ENCODE measurements at regions of chr12 and their contacts with region 1.

Region 1: DNA sequence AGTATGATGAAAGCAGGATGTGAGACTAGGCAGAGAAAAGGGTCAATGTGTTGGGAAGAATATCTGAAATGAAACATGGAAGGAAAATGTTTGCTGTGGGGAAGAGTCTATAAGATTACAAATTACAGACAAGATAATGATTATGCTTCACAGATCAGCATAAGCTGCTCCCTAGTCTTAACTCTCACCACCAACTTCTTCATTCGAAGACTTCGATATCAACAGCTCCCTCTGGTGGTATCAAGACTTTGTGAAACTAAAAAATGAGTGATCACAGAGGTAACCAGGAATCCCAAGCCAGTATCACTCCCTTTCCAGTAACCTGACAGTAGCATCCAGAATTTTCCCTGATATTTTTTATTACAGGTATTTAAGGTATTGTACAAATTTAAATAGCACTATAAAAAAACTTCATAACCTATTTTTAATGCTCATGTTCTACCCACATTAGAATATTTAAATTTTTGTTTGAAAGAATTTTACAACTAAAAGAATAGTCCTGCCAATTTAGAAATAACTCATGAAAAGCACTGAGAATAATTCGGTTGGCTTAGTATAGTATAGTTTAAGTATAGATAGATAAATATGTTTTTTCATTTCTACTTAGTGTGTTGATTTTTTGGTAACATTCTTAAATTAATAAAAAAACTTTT is 84.4 kb downstream of the C2CD5 start:
- DNase-seq: no peak
- ATAC-seq: peak in 2 of 4 donors; percentile 42 to 77
- H3K4me3 ChIP-seq: no peak overlapping the region
- H3K27ac ChIP-seq: no peak overlapping the region
- H3K4me1 ChIP-seq: peaks cover 0 to 14% (median 0%) of the 10 kb centered on the region in 12 donors
- H3K27me3 ChIP-seq: no peaks in the 10 kb centered on the region
- CTCF ChIP-seq: peak in 11 of 12 donors; percentile 37 to 73 (median 57)
- POLR2A ChIP-seq: no peak

Region 2: GRCh38 chr12:22083167-22083566 is 376.8 kb before region 1 on chr12:
- intact Hi-C with region 1: loop called in 5 of 10 experiments (anchors 5 kb)
- DNase-seq: no peak
- ATAC-seq: no peak
- H3K4me3 ChIP-seq: no peak overlapping the region
- H3K27ac ChIP-seq: no peak overlapping the region
- H3K4me1 ChIP-seq: no peaks in the 10 kb centered on the region
- H3K27me3 ChIP-seq: no peaks in the 10 kb centered on the region
- CTCF ChIP-seq: peak; percentile 27 to 68 (median 55)
- POLR2A ChIP-seq: no peak

Region 3: DNA sequence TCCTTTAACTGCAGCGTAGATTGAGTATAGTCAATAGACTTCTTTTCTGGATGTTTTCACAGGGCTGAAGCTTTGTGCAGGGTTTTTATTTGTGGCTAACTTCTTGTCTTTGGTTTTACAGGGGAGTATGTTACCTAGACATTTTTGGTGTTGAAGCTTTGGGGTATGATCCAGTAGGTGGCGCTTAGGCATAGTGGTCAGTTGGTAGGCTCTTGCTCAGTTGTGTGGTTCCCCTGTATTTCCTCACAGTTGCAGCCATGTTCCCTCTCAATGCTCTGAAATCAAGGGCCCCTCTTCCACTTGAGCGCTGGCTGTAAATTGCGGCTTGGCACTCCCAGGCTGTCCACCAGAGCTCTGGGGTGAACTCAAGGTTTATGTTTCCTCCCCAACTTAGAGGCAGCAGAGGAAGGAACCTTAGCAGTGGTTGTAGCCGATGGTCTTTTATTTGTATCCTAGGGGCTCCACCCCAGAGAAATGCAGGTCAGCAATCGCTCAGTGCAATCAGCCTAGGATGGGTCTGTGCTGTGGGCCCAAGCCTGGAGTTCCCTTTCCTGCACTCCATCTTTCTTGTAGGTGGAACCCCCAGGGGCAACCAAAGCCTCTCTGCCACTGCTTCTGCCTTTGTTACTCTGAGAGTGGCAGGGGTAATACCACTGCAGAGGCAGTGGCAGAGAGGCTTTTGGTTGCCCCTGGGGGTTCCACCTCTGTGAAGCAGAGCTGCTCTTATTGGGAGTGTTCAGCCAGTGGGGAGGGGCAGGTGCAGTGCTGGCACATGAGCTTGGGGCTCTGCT is 358.8 kb before region 1 on chr12:
- intact Hi-C with region 1: loop called in 1 of 10 experiments (anchors 5 kb)
- DNase-seq: peak in 3 of 5 donors; percentile 26 to 42 (median 30)
- ATAC-seq: peak in 3 of 4 donors; percentile 68 to 74 (median 72)
- H3K4me3 ChIP-seq: no peak overlapping the region
- H3K27ac ChIP-seq: no peak overlapping the region
- H3K4me1 ChIP-seq: peaks cover 0 to 13% (median 0%) of the 10 kb centered on the region in 12 donors
- H3K27me3 ChIP-seq: no peaks in the 10 kb centered on the region
- CTCF ChIP-seq: peak; percentile 38 to 59 (median 53)
- POLR2A ChIP-seq: no peak